ENCODE measurements at regions of chr12 and their contacts with region 1.

Region 1: GRCh38 chr12:46372544-46373110 is at the start of gene SLC38A2:
- DNase-seq: peak; percentile 90
- ATAC-seq: peak; percentile 83
- H3K4me3 ChIP-seq: peak within 1 kb of the TSS; percentile 82
- H3K27ac ChIP-seq: peak within 1 kb of the TSS; percentile 94
- H3K4me1 ChIP-seq: peaks cover 10% of the 10 kb centered on the region
- H3K27me3 ChIP-seq: no peaks in the 10 kb centered on the region
- CTCF ChIP-seq: no peak
- POLR2A ChIP-seq: peak; percentile 100
- RAD21 ChIP-seq: peak; percentile 47
- total RNA-seq, gene SLC38A2: 881 and 1,389 TPM in 2 replicates

Region 2: GRCh38 chr12:46430340-46430948 is 57.8 kb after region 1 on chr12:
- CTCF ChIA-PET with region 1: no interaction called
- POLR2A ChIA-PET with region 1: interaction called, 3 read pairs
- dilution Hi-C with region 1: no loop called
- in situ Hi-C with region 1: no loop called
- intact Hi-C with region 1: loop called (anchors 5 kb)
- DNase-seq: peak; percentile 89
- ATAC-seq: peak; percentile 15; the same call in 1 of the 2 replicates
- H3K4me3 ChIP-seq: no peak overlapping the region
- H3K27ac ChIP-seq: peak overlapping the region; percentile 66
- H3K4me1 ChIP-seq: peaks cover 10% of the 10 kb centered on the region
- H3K27me3 ChIP-seq: no peaks in the 10 kb centered on the region
- CTCF ChIP-seq: no peak
- POLR2A ChIP-seq: no peak
- RAD21 ChIP-seq: no peak

Region 3: DNA sequence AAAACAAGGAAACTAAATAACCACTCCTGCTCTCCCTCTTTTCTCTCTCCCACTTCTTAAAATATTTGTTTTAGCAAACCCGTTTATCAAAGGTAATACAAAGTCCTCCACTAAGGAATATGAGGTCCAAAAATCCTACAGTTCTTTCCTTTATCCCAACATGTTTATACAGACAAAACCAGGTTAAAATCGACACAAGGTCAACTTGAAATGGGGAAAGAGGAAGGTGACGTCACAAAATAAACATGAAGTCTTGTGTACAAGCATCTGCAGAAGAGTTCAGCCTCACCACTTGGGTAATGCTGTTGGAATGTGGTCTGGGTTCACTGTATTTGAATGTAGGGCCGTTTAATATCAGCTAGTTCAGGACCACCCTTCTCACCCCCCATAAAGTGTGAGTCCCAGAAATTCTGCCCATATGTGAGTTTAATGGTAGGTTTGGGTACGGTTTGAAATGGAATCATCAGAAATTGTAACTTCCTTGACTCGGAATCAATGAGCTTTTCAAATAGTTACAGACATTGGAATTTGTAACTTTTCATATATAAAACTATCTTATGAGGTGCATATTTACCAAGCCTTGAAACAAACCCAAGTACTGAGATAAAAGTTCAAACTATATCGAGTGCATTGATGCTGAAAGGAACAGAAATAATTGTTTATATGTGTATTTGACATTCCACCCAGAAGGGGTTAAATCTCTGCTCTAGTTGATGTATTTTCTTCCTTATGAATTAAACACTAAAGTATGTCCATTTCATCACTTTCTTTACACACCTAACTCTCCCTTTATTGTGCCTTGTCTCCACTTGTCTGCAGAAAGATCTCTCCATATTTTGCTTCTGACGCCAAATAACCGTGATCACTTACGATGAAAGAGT is 120.1 kb after region 1 on chr12:
- CTCF ChIA-PET with region 1: no interaction called
- POLR2A ChIA-PET with region 1: interaction called, 3 read pairs
- dilution Hi-C with region 1: no loop called
- in situ Hi-C with region 1: no loop called
- intact Hi-C with region 1: loop called (anchors 2 kb)
- DNase-seq: peak; percentile 97
- ATAC-seq: peak; percentile 65
- H3K4me3 ChIP-seq: no peak overlapping the region
- H3K27ac ChIP-seq: peak overlapping the region; percentile 93; the same call in 1 of the 2 replicates
- H3K4me1 ChIP-seq: peaks cover 27% of the 10 kb centered on the region
- H3K27me3 ChIP-seq: no peaks in the 10 kb centered on the region
- CTCF ChIP-seq: no peak
- POLR2A ChIP-seq: no peak
- RAD21 ChIP-seq: no peak

Region 4: GRCh38 chr12:46549527-46550265 is 177.1 kb after region 1 on chr12:
- CTCF ChIA-PET with region 1: interaction called, 3 read pairs
- POLR2A ChIA-PET with region 1: interaction called, 3 read pairs
- dilution Hi-C with region 1: no loop called
- in situ Hi-C with region 1: loop called (anchors 10 kb)
- intact Hi-C with region 1: loop called (anchors 2 kb)
- DNase-seq: peak; percentile 97
- ATAC-seq: peak; percentile 68
- H3K4me3 ChIP-seq: peak overlapping the region; percentile 22; the same call in 1 of the 2 replicates
- H3K27ac ChIP-seq: peak overlapping the region; percentile 87
- H3K4me1 ChIP-seq: peaks cover 23% of the 10 kb centered on the region
- H3K27me3 ChIP-seq: no peaks in the 10 kb centered on the region
- CTCF ChIP-seq: no peak
- POLR2A ChIP-seq: peak; percentile 74
- RAD21 ChIP-seq: no peak

Region 5: DNA sequence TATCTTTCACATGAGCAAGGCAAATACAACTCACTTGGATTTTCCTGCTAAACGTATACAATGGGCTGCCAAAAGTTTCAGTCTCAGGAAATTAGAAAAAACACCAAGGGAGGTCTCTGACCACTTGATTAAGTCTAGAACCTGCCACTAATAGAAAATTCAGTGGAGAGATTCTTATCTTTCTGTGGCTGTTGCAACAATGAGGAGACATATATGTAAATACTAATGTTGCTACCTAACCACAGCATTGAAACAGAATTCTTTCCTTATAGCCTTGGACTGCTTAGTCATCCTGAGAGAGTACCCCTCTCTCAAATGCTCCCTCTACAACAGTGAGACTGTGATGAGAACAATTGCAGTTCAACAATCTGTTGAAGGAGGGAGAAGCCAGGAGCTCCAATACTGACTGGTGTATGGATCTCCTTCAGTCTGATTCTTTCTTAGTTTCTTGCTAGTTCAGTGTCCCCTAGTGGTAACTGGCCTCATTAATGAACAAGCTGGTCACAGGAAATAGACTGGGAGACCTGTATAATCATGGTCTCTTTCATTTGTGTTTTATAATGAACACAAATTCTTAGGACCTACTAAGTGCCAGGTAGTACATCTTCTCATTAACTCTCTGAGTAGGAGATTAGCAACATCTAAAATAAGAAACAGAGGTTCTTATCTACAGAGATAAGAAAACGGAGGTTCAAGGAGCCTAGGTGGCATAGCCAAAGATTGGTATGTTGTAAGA is 288.7 kb after region 1 on chr12:
- CTCF ChIA-PET with region 1: no interaction called
- POLR2A ChIA-PET with region 1: interaction called, 8 read pairs
- dilution Hi-C with region 1: no loop called
- in situ Hi-C with region 1: no loop called
- intact Hi-C with region 1: loop called (anchors 1 kb)
- DNase-seq: peak; percentile 95
- ATAC-seq: peak; percentile 76
- H3K4me3 ChIP-seq: peak overlapping the region; percentile 14; the same call in 1 of the 2 replicates
- H3K27ac ChIP-seq: peak overlapping the region; percentile 93
- H3K4me1 ChIP-seq: peaks cover 29% of the 10 kb centered on the region
- H3K27me3 ChIP-seq: no peaks in the 10 kb centered on the region
- CTCF ChIP-seq: peak; percentile 87
- POLR2A ChIP-seq: peak; percentile 32; the same call in 1 of the 2 replicates
- RAD21 ChIP-seq: peak; percentile 84

Region 6: DNA sequence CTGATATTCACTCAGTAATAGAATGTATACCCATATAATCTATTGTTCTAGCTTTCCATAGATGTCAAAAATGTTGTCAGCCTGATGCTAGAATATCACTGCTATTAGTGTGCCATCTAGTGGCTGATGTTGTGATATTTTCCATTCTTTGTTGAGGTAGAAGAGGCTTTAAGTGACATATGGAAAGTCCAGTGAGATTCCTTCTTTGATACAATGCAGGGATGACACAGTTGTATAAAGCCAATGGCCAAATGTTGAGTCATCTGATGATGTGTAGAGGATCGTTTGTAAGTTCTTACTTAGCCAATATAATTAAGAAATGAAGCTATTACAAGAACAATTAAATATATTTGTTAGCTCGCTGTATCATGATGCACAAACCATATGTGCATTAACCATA is 648.7 kb after region 1 on chr12:
- CTCF ChIA-PET with region 1: no interaction called
- POLR2A ChIA-PET with region 1: no interaction called
- dilution Hi-C with region 1: no loop called
- in situ Hi-C with region 1: no loop called
- intact Hi-C with region 1: loop called (anchors 5 kb)
- DNase-seq: peak; percentile 95
- ATAC-seq: peak; percentile 76
- H3K4me3 ChIP-seq: no peak overlapping the region
- H3K27ac ChIP-seq: no peak overlapping the region
- H3K4me1 ChIP-seq: peaks cover 10% of the 10 kb centered on the region
- H3K27me3 ChIP-seq: no peaks in the 10 kb centered on the region
- CTCF ChIP-seq: peak; percentile 73
- POLR2A ChIP-seq: peak; percentile 20; the same call in 1 of the 2 replicates
- RAD21 ChIP-seq: peak; percentile 84

Measured in IMR-90 (cell line).